RWPE1 (cell line): ENCODE measurements at regions of chr6 and their contacts with region 1.

Region 1: GRCh38 chr6:31068669-31069340 is 43.6 kb downstream of the C6orf15 start:
- DNase-seq: peak; percentile 80
- H3K27ac ChIP-seq: no peak overlapping the region
- CTCF ChIP-seq: peak; percentile 91

Region 2: DNA sequence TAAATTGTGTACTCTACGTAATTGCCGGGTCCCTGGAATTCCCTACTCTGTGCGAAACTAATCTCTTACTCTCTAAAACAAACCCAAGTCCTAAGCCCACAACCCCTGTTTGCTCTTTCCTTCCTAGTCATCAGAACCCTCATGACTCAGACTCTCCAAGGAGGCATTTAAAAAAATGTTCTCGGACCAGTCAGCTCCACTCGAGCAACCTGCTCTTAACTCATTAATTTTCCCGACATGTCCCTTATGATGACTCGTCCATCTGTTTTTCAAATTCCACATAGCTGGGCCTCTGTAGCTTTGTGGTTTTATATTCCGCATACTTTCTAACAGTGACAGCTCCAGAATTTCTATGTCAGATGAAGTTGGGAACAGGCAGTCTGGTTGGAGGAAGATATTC is 61.1 kb before region 1 on chr6:
- CTCF ChIA-PET with region 1: no interaction called
- POLR2A ChIA-PET with region 1: no interaction called
- DNase-seq: peak; percentile 64
- H3K27ac ChIP-seq: no peak overlapping the region
- CTCF ChIP-seq: no peak

Region 3: DNA sequence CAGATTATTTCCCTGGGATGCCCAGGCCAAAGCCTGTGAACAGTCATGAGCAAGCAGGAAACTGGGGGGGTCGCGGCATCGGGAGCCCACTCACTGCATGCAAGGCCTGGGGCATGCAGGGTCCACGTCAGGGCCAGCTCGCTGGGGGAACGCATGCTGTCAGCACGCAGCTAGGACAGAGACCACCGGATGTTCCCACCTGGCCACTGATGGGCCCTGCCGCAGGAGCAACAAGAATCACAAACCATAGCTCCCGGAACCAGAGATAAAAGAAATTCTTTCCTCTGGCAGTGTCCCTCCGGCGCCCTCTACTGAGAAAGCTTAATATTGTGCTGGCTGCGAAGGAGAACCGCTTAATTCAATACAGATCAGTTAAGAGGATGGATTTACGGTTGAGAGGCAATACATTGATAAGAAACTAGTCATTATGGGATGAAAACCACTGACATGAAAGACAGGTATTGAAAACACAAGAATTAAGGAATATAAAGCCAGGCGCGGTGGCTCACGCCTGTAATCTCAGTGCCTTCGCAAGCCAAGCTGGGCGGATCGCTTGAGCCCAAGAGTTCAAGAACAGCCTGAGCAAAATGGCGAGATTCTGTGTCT is 11.0 kb after region 1 on chr6:
- CTCF ChIA-PET with region 1: interaction called, 10 read pairs
- POLR2A ChIA-PET with region 1: no interaction called
- DNase-seq: peak; percentile 58
- H3K27ac ChIP-seq: peak overlapping the region; percentile 33; the same call in 1 of the 2 replicates
- CTCF ChIP-seq: peak; percentile 94